Activated naive CD4-positive, alpha-beta T cell treated with anti-CD3 and anti-CD28 coated beads for 36 hours (primary cell): ENCODE measurements at regions of chr2 and their contacts with region 1.

Region 1: GRCh38 chr2:237858294-237859081 is 935 bp upstream of the RAMP1 start:
- DNase-seq: peak; percentile 72
- H3K4me3 Mint-ChIP-seq: peak overlapping the region; percentile 43
- H3K27ac Mint-ChIP-seq: no peak overlapping the region
- H3K4me1 Mint-ChIP-seq: peaks cover 16% of the 10 kb centered on the region
- H3K27me3 Mint-ChIP-seq: peaks cover 18% of the 10 kb centered on the region

Region 2: DNA sequence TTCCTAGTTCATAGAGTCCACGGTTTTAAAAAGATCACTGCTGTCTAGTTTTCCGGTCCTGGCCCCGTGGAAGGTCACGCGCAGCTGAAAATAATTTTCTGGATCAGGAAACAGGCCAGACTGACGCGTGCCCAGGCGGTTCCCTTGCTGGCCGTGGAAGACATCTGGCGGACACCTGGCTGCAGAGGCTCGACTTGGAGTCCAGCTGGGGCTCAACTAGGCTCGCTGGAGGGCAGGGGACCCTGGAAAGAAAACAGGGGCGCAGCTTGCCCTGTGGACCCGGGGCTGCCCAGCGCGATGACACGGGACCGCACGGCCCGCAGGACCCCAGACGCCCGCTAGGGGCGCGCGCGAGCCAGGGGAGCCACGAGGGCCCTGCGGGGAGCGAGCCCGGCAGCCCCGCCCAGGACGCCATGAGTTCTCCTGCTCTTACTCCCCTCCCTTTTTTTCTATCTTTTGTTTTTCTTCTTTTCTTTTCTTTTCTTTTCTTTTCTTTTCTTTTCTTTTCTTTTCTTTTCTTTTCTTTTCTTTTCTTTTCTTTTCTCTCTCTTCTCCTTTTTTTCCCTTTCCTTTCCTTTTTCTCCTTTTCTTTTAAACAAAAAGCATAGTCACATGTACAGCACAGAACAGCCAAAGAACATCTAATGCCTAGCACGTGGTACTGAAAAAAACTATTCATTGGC is 65.1 kb after region 1 on chr2:
- CTCF ChIA-PET with region 1: no interaction called
- intact Hi-C with region 1: loop called (anchors 5 kb)
- DNase-seq: peak; percentile 80
- H3K4me3 Mint-ChIP-seq: peak overlapping the region; percentile 52
- H3K27ac Mint-ChIP-seq: no peak overlapping the region
- H3K4me1 Mint-ChIP-seq: peaks cover 21% of the 10 kb centered on the region
- H3K27me3 Mint-ChIP-seq: no peaks in the 10 kb centered on the region

Region 3: DNA sequence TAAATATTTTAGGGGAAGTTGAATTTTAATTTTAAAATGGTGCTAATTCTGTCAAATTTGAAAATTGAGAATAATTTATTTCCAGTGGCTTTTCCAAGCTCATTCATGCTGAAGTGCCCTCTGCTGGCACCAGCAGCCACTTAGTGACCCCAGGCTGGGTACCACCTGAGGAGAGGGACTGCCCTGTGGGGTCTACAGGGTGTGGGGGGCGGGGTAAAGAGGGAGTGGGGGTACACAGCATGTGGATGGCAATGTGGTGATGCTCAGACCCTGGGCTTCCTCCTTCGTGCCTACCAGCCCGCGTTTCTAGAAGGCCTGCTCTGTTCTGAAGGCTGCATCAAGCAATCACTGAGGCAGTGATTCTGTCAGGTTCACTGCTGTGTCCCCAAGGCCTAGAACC is 157.2 kb after region 1 on chr2:
- CTCF ChIA-PET with region 1: no interaction called
- intact Hi-C with region 1: loop called (anchors 1 kb)
- DNase-seq: no peak
- H3K4me3 Mint-ChIP-seq: no peak overlapping the region
- H3K27ac Mint-ChIP-seq: no peak overlapping the region
- H3K4me1 Mint-ChIP-seq: peaks cover 2% of the 10 kb centered on the region
- H3K27me3 Mint-ChIP-seq: no peaks in the 10 kb centered on the region

Region 4: GRCh38 chr2:238081150-238081549 is 222.7 kb after region 1 on chr2:
- CTCF ChIA-PET with region 1: no interaction called
- intact Hi-C with region 1: no loop called
- DNase-seq: no peak
- H3K4me3 Mint-ChIP-seq: no peak overlapping the region
- H3K27ac Mint-ChIP-seq: no peak overlapping the region
- H3K4me1 Mint-ChIP-seq: peaks cover 4% of the 10 kb centered on the region
- H3K27me3 Mint-ChIP-seq: no peaks in the 10 kb centered on the region

Region 5: DNA sequence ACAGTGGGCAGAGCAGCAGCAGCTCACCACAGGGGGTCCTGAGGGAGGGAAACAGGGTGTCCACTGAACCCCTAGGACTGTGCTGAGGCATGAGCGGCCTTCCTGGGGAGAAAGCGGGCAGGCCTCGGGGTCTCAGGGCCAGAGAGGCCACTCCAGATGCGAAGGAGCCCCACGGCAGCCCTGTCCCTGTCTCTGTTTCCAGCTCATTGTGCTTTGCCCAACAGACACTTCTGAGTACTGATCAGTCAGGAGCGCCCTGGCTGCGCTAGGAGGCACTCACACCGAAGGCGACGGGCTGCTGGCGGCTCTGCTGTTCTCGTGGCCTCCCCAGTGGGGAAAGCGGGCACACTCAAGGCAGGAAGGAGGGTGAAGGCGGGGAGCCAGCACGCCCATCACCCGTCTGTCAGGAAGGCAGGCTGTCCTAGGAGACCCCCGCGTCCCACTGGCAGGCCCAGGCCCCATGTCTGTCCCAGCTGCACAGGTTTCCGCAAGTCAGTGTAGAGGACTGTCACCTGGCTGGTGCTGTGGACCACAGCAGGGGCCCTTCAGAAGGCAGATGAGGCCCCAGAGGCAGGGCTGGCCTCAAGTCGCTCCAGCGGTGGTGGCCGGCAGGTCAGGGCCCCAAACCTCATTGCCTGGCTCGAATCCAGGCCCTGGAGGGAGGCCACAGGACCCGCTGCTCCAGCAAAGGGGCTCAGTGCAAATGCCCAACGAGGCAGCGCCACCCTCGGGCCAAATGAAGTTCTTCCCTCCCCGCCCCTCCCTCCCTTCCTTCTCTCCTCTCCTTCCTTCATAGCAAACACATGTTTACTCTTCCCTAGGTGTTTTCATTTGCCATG is 248.4 kb after region 1 on chr2:
- CTCF ChIA-PET with region 1: no interaction called
- intact Hi-C with region 1: loop called (anchors 2 kb)
- DNase-seq: peak; percentile 44
- H3K4me3 Mint-ChIP-seq: no peak overlapping the region
- H3K27ac Mint-ChIP-seq: no peak overlapping the region
- H3K4me1 Mint-ChIP-seq: peaks cover 10% of the 10 kb centered on the region
- H3K27me3 Mint-ChIP-seq: no peaks in the 10 kb centered on the region

Region 6: GRCh38 chr2:238158527-238159070 is 300.1 kb after region 1 on chr2 and contains the start of gene ERFE:
- CTCF ChIA-PET with region 1: no interaction called
- intact Hi-C with region 1: loop called (anchors 1 kb)
- DNase-seq: peak; percentile 61
- H3K4me3 Mint-ChIP-seq: peak within 1 kb of the TSS; percentile 62
- H3K27ac Mint-ChIP-seq: no peak within 1 kb of the TSS
- H3K4me1 Mint-ChIP-seq: peaks cover 7% of the 10 kb centered on the region
- H3K27me3 Mint-ChIP-seq: peaks cover 17% of the 10 kb centered on the region
- total RNA-seq, gene ERFE: 0.40 TPM in 1 of 2 experiments, not detected in the other

Region 7: DNA sequence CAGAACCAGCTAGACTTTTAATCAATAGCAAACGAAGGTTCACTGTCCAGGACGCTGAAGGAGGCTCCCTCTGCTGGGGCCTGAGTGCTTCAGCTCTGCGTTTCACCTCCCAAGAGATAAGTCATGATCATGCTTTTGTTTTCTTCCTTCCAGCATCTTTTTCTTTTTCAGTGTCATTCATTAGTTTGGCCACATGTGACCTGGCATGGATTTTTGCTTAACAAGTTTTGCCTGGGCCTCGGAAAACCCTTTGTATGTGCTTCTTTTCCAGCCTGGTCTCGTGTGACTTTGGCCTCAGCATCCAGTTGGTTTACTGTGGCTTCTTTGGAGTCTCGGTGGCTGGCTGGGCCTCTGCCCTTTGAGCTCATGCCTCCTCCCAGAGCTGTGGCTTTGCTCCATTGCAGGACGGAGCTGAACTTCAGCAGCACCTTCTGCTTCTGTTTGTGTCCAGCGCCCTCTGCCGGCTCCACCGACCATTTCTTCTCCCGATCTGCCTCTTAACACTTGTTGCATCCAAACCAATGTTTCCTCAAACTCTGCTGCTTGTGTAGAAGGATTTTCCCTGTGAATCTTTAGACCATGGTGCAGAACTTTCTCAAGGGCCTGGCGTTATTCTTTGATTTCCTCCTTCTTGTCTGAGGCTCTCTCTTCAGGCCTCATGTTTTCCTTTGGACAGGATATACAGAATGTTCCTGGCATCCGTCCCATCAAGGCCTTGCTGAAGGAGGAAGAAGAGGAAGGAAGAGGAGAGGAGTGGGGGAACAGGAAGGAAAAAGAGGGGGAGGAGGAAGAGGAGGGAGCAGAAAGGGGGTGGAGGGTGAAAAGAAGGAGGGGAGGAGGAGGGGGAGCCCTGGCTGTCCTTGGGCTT is 404.9 kb after region 1 on chr2:
- CTCF ChIA-PET with region 1: interaction called, 4 read pairs
- intact Hi-C with region 1: loop called (anchors 1 kb)
- DNase-seq: peak; percentile 89
- H3K4me3 Mint-ChIP-seq: no peak overlapping the region
- H3K27ac Mint-ChIP-seq: no peak overlapping the region
- H3K4me1 Mint-ChIP-seq: peaks cover 3% of the 10 kb centered on the region
- H3K27me3 Mint-ChIP-seq: no peaks in the 10 kb centered on the region